PC-9 (cell line): ENCODE measurements at regions of chr15 and their contacts with region 1.

Region 1: GRCh38 chr15:71114896-71115554 is at the start of gene THSD4:
- DNase-seq: peak; percentile 76 to 82
- H3K4me3 ChIP-seq: peak within 1 kb of the TSS; percentile 84
- H3K27ac ChIP-seq: peak within 1 kb of the TSS; percentile 91
- H3K4me1 ChIP-seq: peaks cover 45% of the 10 kb centered on the region
- H3K27me3 ChIP-seq: no peaks in the 10 kb centered on the region
- CTCF ChIP-seq: peak; percentile 98
- total RNA-seq, gene THSD4: 29.3 and 33.1 TPM in 2 replicates

Region 2: DNA sequence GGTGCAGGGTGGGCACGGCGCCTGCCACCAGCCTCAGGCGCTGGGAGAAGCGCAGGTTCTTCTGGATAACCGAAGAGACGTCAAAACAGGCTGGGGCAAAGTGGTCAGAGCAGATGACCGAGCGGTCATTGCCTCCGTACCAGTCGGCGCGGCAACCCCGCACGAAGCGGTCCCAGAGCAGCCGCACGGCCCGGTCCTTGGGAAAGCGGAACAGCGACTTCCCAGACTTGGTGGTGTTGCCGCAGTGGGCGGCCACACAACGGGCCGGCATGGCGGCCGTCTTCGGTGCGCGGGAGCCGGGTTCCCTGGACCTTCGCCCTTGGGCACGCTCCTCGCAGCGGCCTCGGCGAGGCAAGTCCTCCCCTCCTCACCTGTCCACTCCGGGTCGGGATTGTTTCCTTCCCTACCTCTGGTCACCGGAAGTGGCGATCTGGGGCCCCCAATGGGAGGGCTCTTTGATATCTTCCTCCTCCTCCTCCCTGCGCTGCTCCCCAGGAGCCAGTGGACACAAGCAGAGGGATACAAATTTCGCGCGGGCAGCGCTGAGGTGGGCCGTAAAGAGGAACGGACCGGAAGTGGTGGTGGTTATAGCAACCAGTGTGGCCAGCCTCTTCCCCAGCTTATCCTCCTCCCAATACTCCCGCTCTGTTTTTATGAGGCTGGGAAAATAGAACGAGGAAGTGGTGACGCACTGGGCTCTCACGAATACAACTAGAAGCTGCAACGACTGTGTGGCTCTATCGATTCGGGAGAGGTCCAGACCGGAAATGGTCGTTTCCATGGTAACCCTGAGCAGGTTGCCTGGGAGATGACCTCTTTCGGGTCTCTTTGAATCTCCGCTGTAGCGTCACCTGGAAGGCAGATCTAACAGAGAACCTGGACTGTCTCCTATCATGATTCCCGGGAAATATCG is 222.8 kb before region 1 on chr15 and contains the starts of genes LRRC49 and THAP10:
- CTCF ChIA-PET with region 1: no interaction called
- POLR2A ChIA-PET with region 1: no interaction called
- intact Hi-C with region 1: loop called (anchors 1 kb)
- DNase-seq: peak; percentile 87 to 88
- H3K4me3 ChIP-seq: peak within 1 kb of the TSS; percentile 91
- H3K27ac ChIP-seq: peak within 1 kb of the TSS; percentile 54
- H3K4me1 ChIP-seq: peaks cover 22% of the 10 kb centered on the region
- H3K27me3 ChIP-seq: no peaks in the 10 kb centered on the region
- CTCF ChIP-seq: no peak
- total RNA-seq, gene LRRC49: 6.2 and 6.3 TPM in 2 replicates
- total RNA-seq, gene THAP10: 4.2 and 5.5 TPM in 2 replicates

Region 3: GRCh38 chr15:71079208-71080021 is 35.6 kb before region 1 on chr15:
- CTCF ChIA-PET with region 1: interaction called, 7 read pairs
- POLR2A ChIA-PET with region 1: interaction called, 3 read pairs
- intact Hi-C with region 1: loop called (anchors 5 kb)
- DNase-seq: peak; percentile 73 to 93
- H3K4me3 ChIP-seq: no peak overlapping the region
- H3K27ac ChIP-seq: peak overlapping the region; percentile 73
- H3K4me1 ChIP-seq: peaks cover 26% of the 10 kb centered on the region
- H3K27me3 ChIP-seq: no peaks in the 10 kb centered on the region
- CTCF ChIP-seq: no peak

Region 4: DNA sequence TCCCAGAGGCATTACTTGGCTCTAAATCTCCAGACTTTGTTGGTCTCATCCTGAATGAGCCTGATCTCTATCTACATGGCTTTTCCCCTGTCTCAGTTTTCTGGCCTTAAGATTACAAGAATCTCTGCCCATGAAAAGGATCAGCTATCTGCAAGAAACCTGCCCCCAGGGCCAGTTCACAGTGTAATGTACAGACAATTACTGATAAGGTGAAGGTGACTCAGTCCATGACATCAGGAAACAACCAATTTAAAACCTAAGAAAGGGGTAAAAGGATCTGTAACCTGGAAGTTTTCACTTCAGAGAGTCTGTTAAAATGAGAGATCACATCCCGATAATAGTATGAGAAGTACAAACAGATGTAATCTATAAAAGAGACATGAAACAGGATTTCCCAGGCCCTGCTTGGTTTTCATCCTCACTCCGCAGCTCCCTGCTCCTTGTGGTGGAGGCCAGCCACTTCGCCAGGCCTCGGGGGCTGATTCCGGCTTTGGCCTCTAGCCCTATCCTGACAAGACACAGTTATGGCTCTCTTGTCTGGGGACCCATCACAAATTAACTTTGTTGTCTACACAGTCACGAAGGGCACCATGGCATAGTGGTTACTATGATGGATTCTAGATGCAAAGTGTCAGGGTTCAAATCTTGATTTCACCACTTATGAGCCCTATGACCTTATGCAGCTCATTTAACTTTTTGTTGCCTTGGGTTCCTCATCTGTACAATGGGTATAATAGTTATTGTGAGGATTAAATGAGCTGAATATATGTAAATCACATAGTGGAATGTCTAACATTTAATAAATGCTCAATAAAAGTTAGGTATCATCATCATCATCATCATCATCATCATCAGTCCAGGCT is 137.2 kb after region 1 on chr15:
- CTCF ChIA-PET with region 1: no interaction called
- POLR2A ChIA-PET with region 1: no interaction called
- intact Hi-C with region 1: loop called (anchors 1 kb)
- DNase-seq: peak; percentile 82 to 96
- H3K4me3 ChIP-seq: no peak overlapping the region; the same call in 1 of the 2 replicates
- H3K27ac ChIP-seq: peak overlapping the region; percentile 90
- H3K4me1 ChIP-seq: peaks cover 37% of the 10 kb centered on the region
- H3K27me3 ChIP-seq: no peaks in the 10 kb centered on the region
- CTCF ChIP-seq: no peak

Region 5: DNA sequence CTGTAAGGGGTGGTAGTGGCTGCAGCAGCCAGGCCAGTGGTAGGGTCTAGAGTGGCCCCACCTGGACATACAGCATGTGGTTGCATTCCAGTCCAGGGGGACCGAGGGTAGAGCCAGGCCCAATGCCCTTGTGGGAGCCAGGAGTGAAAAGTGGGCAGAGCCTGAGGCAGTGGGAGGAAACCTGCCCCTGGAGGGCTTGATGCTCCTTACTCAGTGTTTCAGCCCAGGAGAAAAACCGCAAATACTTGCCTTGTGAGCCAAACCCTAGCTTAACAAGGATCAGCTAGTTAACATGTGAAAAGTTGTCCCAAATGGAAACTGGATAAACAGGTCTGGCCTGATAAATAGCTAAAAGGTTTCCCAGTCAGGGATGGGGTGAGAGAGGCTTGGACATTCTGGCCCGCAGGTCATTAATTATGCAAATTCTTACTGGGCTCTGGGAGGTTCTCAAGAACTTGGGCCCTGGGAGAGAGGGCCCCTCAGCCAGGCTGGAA is 222.2 kb after region 1 on chr15:
- CTCF ChIA-PET with region 1: interaction called, 3 read pairs
- POLR2A ChIA-PET with region 1: no interaction called
- intact Hi-C with region 1: loop called (anchors 5 kb)
- DNase-seq: peak; percentile 80 to 97
- H3K4me3 ChIP-seq: peak overlapping the region; percentile 42; the same call in 1 of the 2 replicates
- H3K27ac ChIP-seq: peak overlapping the region; percentile 97
- H3K4me1 ChIP-seq: peaks cover 60% of the 10 kb centered on the region
- H3K27me3 ChIP-seq: no peaks in the 10 kb centered on the region
- CTCF ChIP-seq: no peak